ENCODE measurements at regions of chr5 and their contacts with region 1.

Region 1: DNA sequence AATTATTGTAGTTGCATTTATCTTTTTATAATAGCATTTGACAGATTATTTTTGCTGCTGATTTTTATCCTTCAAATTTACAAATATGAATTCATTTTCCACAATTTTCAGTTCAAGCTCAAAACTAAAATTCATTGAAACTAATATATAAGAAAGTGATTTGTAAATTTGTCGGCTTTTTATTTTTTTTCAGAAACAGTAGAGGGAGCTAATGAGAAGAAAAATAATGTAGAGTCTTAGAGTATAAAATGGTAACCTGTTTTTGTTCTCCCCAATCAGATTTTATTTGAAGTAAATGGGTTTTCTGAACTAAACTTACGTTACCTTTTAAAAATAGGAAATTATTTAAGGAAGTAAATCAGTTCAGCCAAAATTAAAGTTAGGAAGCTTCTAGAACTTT is 19.2 kb downstream of the PRRC1 start:
- DNase-seq: peak; percentile 10
- H3K4me3 ChIP-seq: no peak overlapping the region
- H3K27ac ChIP-seq: no peak overlapping the region
- H3K4me1 ChIP-seq: no peaks in the 10 kb centered on the region
- H3K27me3 ChIP-seq: no peaks in the 10 kb centered on the region
- CTCF ChIP-seq: peak in 1 of 2 donors; percentile 7
- POLR2A ChIP-seq: no peak

Region 2: GRCh38 chr5:127351418-127351817 is 185.3 kb before region 1 on chr5:
- CTCF ChIA-PET with region 1: no interaction called
- POLR2A ChIA-PET with region 1: no interaction called
- dilution Hi-C with region 1: no loop called
- intact Hi-C with region 1: no loop called
- DNase-seq: no peak
- H3K4me3 ChIP-seq: no peak overlapping the region
- H3K27ac ChIP-seq: no peak overlapping the region
- H3K4me1 ChIP-seq: no peaks in the 10 kb centered on the region
- H3K27me3 ChIP-seq: peaks cover 3 to 15% of the 10 kb centered on the region in 2 experiments
- CTCF ChIP-seq: no peak
- POLR2A ChIP-seq: no peak

Region 3: DNA sequence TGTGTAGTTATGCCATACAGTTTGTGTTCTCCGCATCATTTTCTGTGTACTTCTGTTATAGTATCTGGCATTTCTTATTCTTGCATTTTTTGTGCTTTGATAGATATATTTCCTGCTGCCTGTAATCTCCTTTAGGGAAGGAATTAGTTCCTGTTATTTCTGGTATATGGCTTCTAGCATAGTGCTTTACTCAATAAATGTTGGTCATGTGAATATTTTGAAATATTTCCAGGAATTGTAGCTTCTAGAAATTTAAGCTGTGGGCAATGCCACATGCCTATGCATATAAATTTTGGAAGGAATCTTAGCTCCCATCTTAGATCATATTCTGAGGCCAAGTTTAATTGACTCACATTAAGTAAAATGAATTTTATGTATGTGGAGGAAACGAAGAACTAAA is 30.8 kb before region 1 on chr5:
- CTCF ChIA-PET with region 1: no interaction called
- POLR2A ChIA-PET with region 1: no interaction called
- dilution Hi-C with region 1: no loop called
- intact Hi-C with region 1: loop called (anchors 1 kb)
- DNase-seq: no peak
- H3K4me3 ChIP-seq: no peak overlapping the region
- H3K27ac ChIP-seq: no peak overlapping the region
- H3K4me1 ChIP-seq: no peaks in the 10 kb centered on the region
- H3K27me3 ChIP-seq: peaks cover 20 to 26% of the 10 kb centered on the region in 2 experiments
- CTCF ChIP-seq: no peak
- POLR2A ChIP-seq: no peak

Region 4: DNA sequence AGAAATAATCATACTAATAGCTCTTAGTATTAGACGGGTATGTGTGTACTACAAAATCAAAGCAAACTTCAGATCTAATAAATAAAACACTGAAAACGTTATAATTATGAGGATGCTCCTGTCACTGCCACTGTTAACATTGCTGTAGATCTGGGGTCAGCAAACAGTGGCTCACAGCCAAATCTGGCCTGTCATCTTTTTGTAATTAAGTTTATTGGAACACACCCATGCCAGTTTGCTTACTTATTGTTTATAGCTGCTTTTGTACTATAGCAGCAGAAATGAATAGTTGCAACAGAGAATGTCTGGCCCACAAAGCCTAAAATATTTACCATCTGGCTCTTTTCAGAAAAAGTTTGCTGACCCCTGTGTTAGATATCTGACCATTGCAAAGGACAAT is 12.8 kb after region 1 on chr5:
- CTCF ChIA-PET with region 1: interaction called, 10 read pairs
- POLR2A ChIA-PET with region 1: no interaction called
- dilution Hi-C with region 1: no loop called
- intact Hi-C with region 1: no loop called
- DNase-seq: no peak
- H3K4me3 ChIP-seq: no peak overlapping the region
- H3K27ac ChIP-seq: no peak overlapping the region
- H3K4me1 ChIP-seq: no peaks in the 10 kb centered on the region
- H3K27me3 ChIP-seq: no peaks in the 10 kb centered on the region
- CTCF ChIP-seq: no peak
- POLR2A ChIP-seq: no peak

Region 5: GRCh38 chr5:128163991-128164390 is 627.3 kb after region 1 on chr5:
- CTCF ChIA-PET with region 1: no interaction called
- POLR2A ChIA-PET with region 1: no interaction called
- dilution Hi-C with region 1: no loop called
- intact Hi-C with region 1: no loop called
- DNase-seq: peak; percentile 46
- H3K4me3 ChIP-seq: no peak overlapping the region
- H3K27ac ChIP-seq: no peak overlapping the region
- H3K4me1 ChIP-seq: peaks cover 5% of the 10 kb centered on the region
- H3K27me3 ChIP-seq: no peaks in the 10 kb centered on the region
- CTCF ChIP-seq: no peak
- POLR2A ChIP-seq: no peak